A549 (cell line): ENCODE measurements at regions of chr11 and their contacts with region 1.

Region 1: GRCh38 chr11:12893787-12894672 is 115.1 kb upstream of the RASSF10 start:
- DNase-seq: peak; percentile 48 to 51
- ATAC-seq: peak; percentile 53 to 76
- H3K4me3 ChIP-seq: no peak overlapping the region
- H3K27ac ChIP-seq: peak overlapping the region; percentile 1 to 78; a peak in 4 of 6 replicates
- H3K4me1 ChIP-seq: peaks cover 17% of the 10 kb centered on the region
- CTCF ChIP-seq: peak; percentile 91
- EP300 ChIP-seq: no peak
- POLR2A ChIP-seq: no peak; the same call in 1 of the 2 replicates
- RAD21 ChIP-seq: peak; percentile 90

Region 2: GRCh38 chr11:12868315-12869073 is 25.5 kb before region 1 on chr11:
- CTCF ChIA-PET with region 1: interaction called, 11 read pairs
- POLR2A ChIA-PET with region 1: no interaction called
- DNase-seq: no peak
- ATAC-seq: peak; percentile 48 to 51; a peak in 3 of 6 replicates
- H3K4me3 ChIP-seq: no peak overlapping the region
- H3K27ac ChIP-seq: peak overlapping the region in 1 of 2 experiments; percentile 49; a peak in 2 of 6 replicates
- H3K4me1 ChIP-seq: peaks cover 57% of the 10 kb centered on the region
- CTCF ChIP-seq: peak; percentile 41; the same call in 2 of the 3 replicates
- EP300 ChIP-seq: no peak
- POLR2A ChIP-seq: no peak
- RAD21 ChIP-seq: no peak

Region 3: GRCh38 chr11:12930850-12931249 is 36.8 kb after region 1 on chr11:
- CTCF ChIA-PET with region 1: no interaction called
- POLR2A ChIA-PET with region 1: no interaction called
- DNase-seq: no peak
- ATAC-seq: no peak
- H3K4me3 ChIP-seq: no peak overlapping the region
- H3K27ac ChIP-seq: no peak overlapping the region
- H3K4me1 ChIP-seq: no peaks in the 10 kb centered on the region
- CTCF ChIP-seq: no peak
- EP300 ChIP-seq: no peak
- POLR2A ChIP-seq: no peak
- RAD21 ChIP-seq: no peak

Region 4: GRCh38 chr11:13238879-13239514 is 345.0 kb after region 1 on chr11:
- CTCF ChIA-PET with region 1: no interaction called
- POLR2A ChIA-PET with region 1: no interaction called
- DNase-seq: peak; percentile 55 to 57
- ATAC-seq: peak; percentile 59 to 95; a peak in 4 of 6 replicates
- H3K4me3 ChIP-seq: no peak overlapping the region
- H3K27ac ChIP-seq: peak overlapping the region in 1 of 2 experiments; percentile 14; a peak in 3 of 6 replicates
- H3K4me1 ChIP-seq: 0 out of 3 replicates have a peak, but pooled peaks cover 2% of the 10 kb centered on the region
- CTCF ChIP-seq: peak; percentile 77
- EP300 ChIP-seq: no peak
- POLR2A ChIP-seq: no peak
- RAD21 ChIP-seq: peak; percentile 71 to 78